Activated T-helper 1 cell treated with anti-CD3 and anti-CD28 coated beads, Interleukin-12 subunit alpha, Interleukin-12 subunit beta, Interleukin-2, Interleukin-4 antibody, amounts not matched to agents 30 ng/mL and 10 ng/mL and 1 ng/mL, durations not matched to agents 14 hours and 24 hours and 36 hours (primary cell): ENCODE measurements at regions of chr16 and their contacts with region 1.

Region 1: GRCh38 chr16:80804056-80804450 is 345 bp downstream of the CDYL2 start:
- DNase-seq: peak; percentile 56
- H3K4me3 Mint-ChIP-seq: peak overlapping the region; percentile 95
- H3K27ac Mint-ChIP-seq: peak overlapping the region; percentile 98
- H3K4me1 Mint-ChIP-seq: peaks cover 57% of the 10 kb centered on the region
- H3K27me3 Mint-ChIP-seq: no peaks in the 10 kb centered on the region

Region 2: GRCh38 chr16:79843631-79844043 is 960.4 kb before region 1 on chr16:
- intact Hi-C with region 1: loop called (anchors 5 kb)
- DNase-seq: no peak
- H3K4me3 Mint-ChIP-seq: peak overlapping the region; percentile 45
- H3K27ac Mint-ChIP-seq: peak overlapping the region; percentile 70
- H3K4me1 Mint-ChIP-seq: peaks cover 42% of the 10 kb centered on the region
- H3K27me3 Mint-ChIP-seq: no peaks in the 10 kb centered on the region

Region 3: GRCh38 chr16:80569440-80570105 is 234.5 kb before region 1 on chr16:
- intact Hi-C with region 1: loop called (anchors 1 kb)
- DNase-seq: peak; percentile 74
- H3K4me3 Mint-ChIP-seq: peak overlapping the region; percentile 51
- H3K27ac Mint-ChIP-seq: peak overlapping the region; percentile 93
- H3K4me1 Mint-ChIP-seq: peaks cover 60% of the 10 kb centered on the region
- H3K27me3 Mint-ChIP-seq: no peaks in the 10 kb centered on the region

Region 4: GRCh38 chr16:80693553-80693952 is 110.5 kb before region 1 on chr16:
- intact Hi-C with region 1: loop called (anchors 2 kb)
- DNase-seq: no peak
- H3K4me3 Mint-ChIP-seq: no peak overlapping the region
- H3K27ac Mint-ChIP-seq: peak overlapping the region; percentile 71
- H3K4me1 Mint-ChIP-seq: peaks cover 83% of the 10 kb centered on the region
- H3K27me3 Mint-ChIP-seq: peaks cover 1% of the 10 kb centered on the region

Region 5: DNA sequence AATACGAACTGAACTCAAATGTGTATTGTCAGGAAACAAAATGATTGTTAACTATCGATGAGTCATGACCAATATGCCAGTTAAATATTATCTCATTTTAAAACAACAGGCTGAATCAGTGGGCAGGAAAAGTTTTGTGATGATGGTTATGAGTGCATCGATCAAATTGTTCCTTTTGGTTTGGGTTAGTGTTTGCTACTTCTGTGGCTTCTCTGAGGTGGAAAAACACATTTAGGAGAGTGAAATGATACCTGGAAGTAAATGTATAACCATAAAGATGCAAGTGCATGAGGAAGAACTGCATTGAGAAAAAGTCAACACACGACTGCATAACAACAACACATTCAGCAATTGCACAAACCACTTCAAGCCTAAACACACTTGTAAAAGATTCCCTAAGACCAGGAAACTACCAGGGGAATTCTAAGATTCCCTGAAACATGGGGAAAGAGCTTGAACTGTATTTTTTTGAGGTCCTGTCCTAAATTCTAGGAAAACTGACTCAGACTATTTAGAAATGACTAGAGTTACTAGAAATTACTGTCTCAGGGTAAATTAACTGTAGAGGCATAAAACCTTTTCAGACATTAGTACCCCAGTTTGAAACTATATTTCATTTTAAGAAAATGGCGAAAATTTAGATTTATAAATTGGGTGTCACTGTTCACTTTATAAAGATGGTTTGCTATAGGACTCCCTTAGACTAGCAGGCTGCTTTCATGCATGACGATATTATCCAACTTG is 44.5 kb before region 1 on chr16:
- intact Hi-C with region 1: loop called (anchors 1 kb)
- DNase-seq: no peak
- H3K4me3 Mint-ChIP-seq: peak overlapping the region; percentile 23
- H3K27ac Mint-ChIP-seq: peak overlapping the region; percentile 67
- H3K4me1 Mint-ChIP-seq: peaks cover 44% of the 10 kb centered on the region
- H3K27me3 Mint-ChIP-seq: no peaks in the 10 kb centered on the region

Region 6: DNA sequence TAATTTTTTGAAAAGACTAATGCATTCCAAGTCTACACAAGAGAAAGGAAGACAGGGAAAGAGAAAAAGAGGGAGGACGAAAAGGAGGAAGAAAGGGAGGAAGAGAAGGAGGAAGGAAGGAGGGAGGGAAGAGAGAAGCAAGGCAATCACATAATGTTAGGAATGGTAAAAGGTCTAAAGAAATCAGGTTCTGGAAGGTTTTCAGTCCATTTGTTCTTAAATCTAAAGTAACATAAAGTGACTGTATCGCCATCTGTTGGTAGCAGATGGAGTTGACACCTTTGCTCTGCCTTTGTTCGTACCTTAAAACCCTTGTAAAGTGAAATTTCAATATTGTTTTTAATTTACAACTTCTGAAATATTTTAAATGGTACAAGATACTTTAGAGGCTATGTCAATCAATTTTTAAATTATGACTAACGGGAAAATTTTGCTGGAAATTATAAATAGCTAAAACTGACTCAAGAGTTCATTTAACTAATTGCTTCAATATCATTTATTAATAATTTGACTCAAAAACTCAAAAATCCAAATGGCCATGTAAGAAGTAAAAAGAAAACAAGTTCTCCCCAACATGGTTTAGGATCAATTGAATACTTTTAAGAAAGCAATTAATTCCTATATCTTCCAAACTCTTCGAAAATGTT is 20.8 kb after region 1 on chr16:
- intact Hi-C with region 1: no loop called
- DNase-seq: no peak
- H3K4me3 Mint-ChIP-seq: no peak overlapping the region
- H3K27ac Mint-ChIP-seq: no peak overlapping the region
- H3K4me1 Mint-ChIP-seq: peaks cover 7% of the 10 kb centered on the region
- H3K27me3 Mint-ChIP-seq: peaks cover 15% of the 10 kb centered on the region

Region 7: DNA sequence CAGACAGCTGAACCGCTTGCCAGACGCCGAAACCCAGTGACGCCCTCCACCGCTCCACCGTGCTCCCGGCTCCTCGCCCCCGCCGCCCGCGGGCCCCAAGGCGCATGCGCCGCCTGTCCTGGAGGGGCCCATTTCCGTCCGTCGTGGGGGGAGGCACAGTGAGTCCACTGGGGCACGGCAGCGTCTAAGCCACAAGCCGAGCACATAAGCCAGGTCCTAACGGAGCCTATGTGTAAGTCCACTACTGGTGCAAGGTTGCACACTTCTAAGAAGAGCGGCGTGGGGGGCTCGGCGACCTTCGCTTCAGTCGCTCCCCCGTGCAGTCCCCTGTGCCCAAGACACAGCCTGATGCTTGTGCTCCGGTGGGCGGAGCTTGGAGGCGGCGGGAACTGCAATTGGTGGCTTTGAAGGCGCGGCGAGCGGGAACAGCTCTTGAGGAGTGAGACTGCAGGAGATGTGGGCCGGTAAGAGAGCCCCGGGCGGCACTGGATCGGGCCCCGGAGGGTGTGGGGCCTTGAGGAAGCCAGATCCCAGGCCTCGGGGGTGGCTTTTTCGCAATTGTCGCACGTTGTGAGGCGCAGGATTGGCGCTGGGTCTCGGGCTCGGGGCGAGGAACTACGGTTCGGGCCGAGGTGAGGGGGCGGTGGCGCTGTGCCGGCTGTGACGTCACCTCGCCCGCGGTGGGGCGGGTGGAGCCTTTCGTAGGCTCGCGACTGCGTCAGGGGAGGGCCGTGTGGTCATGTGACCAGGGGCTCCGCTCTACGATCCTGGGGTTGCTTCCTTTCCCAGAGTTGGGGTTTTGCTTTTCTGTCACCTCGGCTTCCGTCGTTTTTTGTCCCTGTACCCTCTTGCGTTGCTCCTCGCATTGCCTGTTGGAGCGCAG is 203.0 kb after region 1 on chr16 and contains the starts of genes CENPN and CMC2:
- intact Hi-C with region 1: loop called (anchors 1 kb)
- DNase-seq: peak; percentile 97
- H3K4me3 Mint-ChIP-seq: peak within 1 kb of the TSS; percentile 100
- H3K27ac Mint-ChIP-seq: peak within 1 kb of the TSS; percentile 100
- H3K4me1 Mint-ChIP-seq: peaks cover 61% of the 10 kb centered on the region
- H3K27me3 Mint-ChIP-seq: peaks cover 2% of the 10 kb centered on the region
- total RNA-seq, gene CENPN: 65.6 and 67.8 TPM in 2 replicates
- total RNA-seq, gene CMC2: 141 and 156 TPM in 2 replicates